Activated B cell treated with CpG ODN at 0.5 μM for 24 hours (primary cell): ENCODE measurements at regions of chr2 and their contacts with region 1.

Region 1: GRCh38 chr2:237085248-237086221 is at the start of gene COPS8:
- DNase-seq: peak; percentile 86
- ATAC-seq: peak; percentile 97
- H3K4me3 Mint-ChIP-seq: peak within 1 kb of the TSS; percentile 100
- H3K27ac Mint-ChIP-seq: peak within 1 kb of the TSS; percentile 97
- H3K4me1 Mint-ChIP-seq: peaks cover 23% of the 10 kb centered on the region
- H3K27me3 Mint-ChIP-seq: no peaks in the 10 kb centered on the region
- CTCF ChIP-seq: no peak
- total RNA-seq, gene COPS8: 31.8 and 35.1 TPM in 2 replicates

Region 2: DNA sequence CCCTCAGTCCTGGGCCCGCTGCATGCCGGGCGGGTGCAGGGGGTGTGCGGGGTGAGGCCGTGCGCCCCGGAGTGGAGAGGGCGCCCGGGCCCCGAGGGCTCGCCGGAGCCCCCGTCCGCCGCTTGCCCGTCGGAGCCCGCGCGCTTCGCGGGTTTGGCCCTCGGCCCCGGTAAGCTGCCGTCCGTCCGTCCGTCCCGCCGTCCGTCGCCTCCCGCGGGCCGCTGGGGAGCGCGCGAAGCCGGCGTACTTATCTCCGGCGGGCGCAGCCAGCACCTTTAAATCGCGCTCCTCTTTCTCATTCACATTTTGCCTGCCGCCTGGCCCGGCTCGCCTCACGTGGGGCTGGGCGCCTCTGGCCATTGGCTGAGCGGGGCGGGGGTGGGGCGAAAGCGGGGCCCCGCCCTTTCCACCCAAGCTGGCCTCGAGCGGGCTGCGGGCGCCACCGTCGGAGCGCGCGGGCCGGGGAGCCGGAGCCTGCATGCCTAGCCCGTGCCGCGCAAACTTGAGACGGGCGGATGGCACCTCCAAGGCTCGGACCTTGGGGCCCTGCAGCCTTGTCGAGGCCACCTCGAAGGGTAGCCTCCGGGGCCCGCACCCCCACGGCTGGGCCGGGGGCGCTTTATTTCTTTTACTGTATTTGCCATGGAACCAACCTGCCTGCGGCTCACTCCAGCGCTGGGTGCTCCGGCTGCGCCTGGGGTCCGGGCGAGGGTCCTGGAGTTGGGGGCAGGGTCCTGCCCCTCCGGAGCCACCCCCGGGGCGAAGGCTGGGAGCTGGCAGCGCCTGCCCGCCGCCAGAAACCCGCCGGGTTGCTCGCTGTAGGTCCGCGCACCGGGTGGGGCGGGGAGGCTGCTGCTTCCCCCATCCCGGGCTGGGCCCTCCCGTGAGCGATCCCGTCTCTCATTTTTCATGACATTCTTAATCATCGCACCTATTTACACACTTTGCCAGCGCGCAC is 917.1 kb before region 1 on chr2 and contains the start of gene GBX2:
- CTCF ChIA-PET with region 1: no interaction called
- POLR2A ChIA-PET with region 1: no interaction called
- intact Hi-C with region 1: no loop called
- DNase-seq: no peak
- ATAC-seq: no peak
- H3K4me3 Mint-ChIP-seq: no peak within 1 kb of the TSS
- H3K27ac Mint-ChIP-seq: no peak within 1 kb of the TSS
- H3K4me1 Mint-ChIP-seq: peaks cover 10% of the 10 kb centered on the region
- H3K27me3 Mint-ChIP-seq: peaks cover 55% of the 10 kb centered on the region
- CTCF ChIP-seq: no peak
- total RNA-seq, gene GBX2: not detected in 2 replicates

Region 3: GRCh38 chr2:237060534-237061312 is 24.8 kb before region 1 on chr2:
- CTCF ChIA-PET with region 1: interaction called, 3 read pairs
- POLR2A ChIA-PET with region 1: interaction called, 4 read pairs
- intact Hi-C with region 1: loop called (anchors 1 kb)
- DNase-seq: no peak
- ATAC-seq: no peak
- H3K4me3 Mint-ChIP-seq: no peak overlapping the region
- H3K27ac Mint-ChIP-seq: no peak overlapping the region
- H3K4me1 Mint-ChIP-seq: peaks cover 37% of the 10 kb centered on the region
- H3K27me3 Mint-ChIP-seq: no peaks in the 10 kb centered on the region
- CTCF ChIP-seq: no peak

Region 4: DNA sequence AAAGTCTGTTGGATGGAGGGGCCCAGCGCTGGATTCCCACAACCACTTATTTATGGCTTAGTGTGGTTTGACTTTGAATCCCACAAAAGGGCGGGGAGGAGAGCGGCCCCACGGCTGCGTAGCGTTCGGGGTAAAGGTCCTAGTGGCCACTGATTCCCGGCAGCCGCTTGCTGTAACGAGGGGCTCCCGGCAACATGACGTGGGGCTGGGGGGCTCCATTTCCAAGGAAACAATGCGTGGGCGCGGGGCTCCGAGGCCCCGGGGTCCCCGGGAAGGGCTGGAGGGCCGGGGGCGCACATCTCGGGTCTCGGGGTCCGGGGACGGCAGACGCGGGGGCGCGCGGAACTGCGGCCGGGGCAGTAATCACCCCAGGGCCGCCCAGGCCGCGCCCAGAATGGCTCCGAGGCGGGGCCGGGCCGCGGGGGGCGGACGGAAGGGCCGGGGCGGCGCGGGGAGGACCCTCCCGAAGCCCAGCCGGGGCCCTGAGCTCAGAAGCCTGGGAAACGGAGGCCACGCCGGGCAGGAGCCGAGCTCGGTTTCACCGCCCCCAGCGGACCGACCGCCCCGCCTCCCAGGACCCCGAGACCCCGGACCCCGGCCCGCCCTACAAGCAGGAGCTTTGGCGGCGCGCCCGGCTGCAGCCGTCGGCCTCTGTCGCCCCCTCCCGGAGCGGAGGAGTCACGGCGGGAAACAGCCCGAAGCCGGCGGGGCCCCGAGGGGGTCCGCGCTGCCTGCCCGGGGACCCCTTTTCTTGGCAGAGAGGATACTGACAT is 389.6 kb after region 1 on chr2:
- CTCF ChIA-PET with region 1: no interaction called
- POLR2A ChIA-PET with region 1: interaction called, 3 read pairs
- intact Hi-C with region 1: loop called (anchors 1 kb)
- DNase-seq: peak; percentile 89
- ATAC-seq: peak; percentile 91
- H3K4me3 Mint-ChIP-seq: peak overlapping the region; percentile 87
- H3K27ac Mint-ChIP-seq: peak overlapping the region; percentile 84
- H3K4me1 Mint-ChIP-seq: peaks cover 8% of the 10 kb centered on the region
- H3K27me3 Mint-ChIP-seq: peaks cover 30% of the 10 kb centered on the region
- CTCF ChIP-seq: peak; percentile 27

Region 5: GRCh38 chr2:238426568-238427434 is 1341.3 kb after region 1 on chr2 and contains the start of gene ASB1:
- CTCF ChIA-PET with region 1: no interaction called
- POLR2A ChIA-PET with region 1: no interaction called
- intact Hi-C with region 1: loop called (anchors 10 kb)
- DNase-seq: peak; percentile 84
- ATAC-seq: peak; percentile 86
- H3K4me3 Mint-ChIP-seq: peak within 1 kb of the TSS; percentile 92
- H3K27ac Mint-ChIP-seq: peak within 1 kb of the TSS; percentile 94
- H3K4me1 Mint-ChIP-seq: peaks cover 39% of the 10 kb centered on the region
- H3K27me3 Mint-ChIP-seq: no peaks in the 10 kb centered on the region
- CTCF ChIP-seq: no peak
- total RNA-seq, gene ASB1: 44.5 and 49.8 TPM in 2 replicates